ENCODE measurements at regions of chr13 and their contacts with region 1.

Region 1: DNA sequence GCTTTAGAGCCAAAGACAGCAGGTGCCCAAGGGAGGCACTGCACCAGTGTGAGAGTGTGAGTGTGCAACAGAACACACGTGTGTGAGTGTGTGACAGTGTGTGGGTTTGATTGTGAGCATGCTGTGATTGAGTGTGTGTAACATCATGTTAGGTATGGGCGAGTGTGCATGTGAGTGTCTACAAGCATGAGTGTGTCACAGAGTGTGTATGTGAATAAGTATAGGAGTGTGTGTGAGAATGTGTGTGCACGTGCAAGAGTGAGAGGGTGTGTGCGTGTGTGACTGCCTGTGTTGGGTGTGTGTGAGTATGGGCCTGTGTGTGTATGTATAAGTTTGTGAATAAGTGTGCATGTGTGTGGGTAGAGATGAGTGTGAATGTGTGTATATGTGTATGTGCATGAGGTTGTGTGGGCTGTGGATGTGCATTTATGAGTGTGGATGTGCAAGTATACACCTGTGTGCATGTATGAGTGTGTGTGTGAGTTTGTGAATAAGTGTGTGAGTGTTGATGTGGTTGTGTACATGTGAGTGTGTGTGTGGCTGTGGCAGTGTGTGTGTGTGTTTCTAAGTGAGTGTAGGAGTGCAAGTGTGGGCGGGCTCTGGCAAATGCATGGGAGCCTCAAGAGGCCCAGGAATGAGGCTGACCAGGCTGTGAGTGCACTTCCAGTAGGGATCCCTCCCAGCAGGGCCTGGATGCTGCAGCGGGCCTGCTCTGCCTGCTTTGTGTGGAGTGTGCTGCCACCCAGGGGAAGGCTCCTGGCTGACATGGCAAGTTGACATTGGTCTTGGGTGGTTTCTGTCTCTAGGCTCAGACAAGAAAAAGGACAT is 198.4 kb downstream of the COL4A1 start:
- DNase-seq: peak in 1 of 2 donors; percentile 57
- H3K4me3 ChIP-seq: no peak overlapping the region
- CTCF ChIP-seq: no peak
- POLR2A ChIP-seq: no peak

Region 2: GRCh38 chr13:108957369-108958012 is 1151.1 kb before region 1 on chr13:
- intact Hi-C with region 1: loop called (anchors 10 kb)
- DNase-seq: no peak
- H3K4me3 ChIP-seq: no peak overlapping the region
- CTCF ChIP-seq: no peak
- POLR2A ChIP-seq: no peak

Region 3: GRCh38 chr13:109145631-109146030 is 962.9 kb before region 1 on chr13:
- intact Hi-C with region 1: loop called (anchors 5 kb)
- DNase-seq: no peak
- H3K4me3 ChIP-seq: no peak overlapping the region
- CTCF ChIP-seq: no peak
- POLR2A ChIP-seq: no peak

Region 4: DNA sequence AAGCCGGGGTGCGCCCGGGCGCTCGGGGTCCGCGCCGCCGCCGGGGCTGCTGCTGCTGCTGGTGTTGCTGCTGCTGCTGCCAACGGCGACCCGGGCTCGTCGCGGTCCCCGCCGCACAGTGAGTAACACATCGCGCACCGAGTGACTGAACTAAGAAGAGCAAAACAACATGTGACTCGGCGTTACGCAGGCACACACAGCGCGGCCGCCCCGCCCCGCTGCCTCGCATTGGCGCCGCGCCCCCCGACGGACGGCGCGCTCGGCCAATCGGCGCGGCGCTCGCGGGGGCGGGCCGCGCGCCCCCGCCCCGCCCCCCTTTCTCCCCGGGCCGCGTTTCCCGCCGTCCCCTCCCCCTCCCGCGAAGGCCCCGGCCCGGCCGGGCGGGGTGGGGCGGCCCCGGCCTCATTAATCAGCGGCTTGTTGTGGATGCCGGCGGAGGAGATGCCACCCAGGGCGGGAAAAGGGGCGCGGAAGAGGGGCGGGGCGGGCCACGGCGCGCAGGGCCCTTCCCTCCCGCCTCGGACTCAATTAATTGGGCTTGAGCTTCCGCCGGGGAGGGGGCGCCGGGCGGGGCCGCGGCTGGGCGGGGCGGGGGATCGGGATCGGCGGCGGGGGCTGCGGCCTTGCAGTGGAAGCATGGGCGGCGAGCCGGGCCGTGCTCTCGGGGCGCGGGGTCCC is 322.0 kb before region 1 on chr13 and contains the start of gene IRS2:
- intact Hi-C with region 1: loop called (anchors 10 kb)
- DNase-seq: peak; percentile 95 to 99
- H3K4me3 ChIP-seq: peak within 1 kb of the TSS; percentile 62
- CTCF ChIP-seq: no peak
- POLR2A ChIP-seq: peak in 1 of 2 donors; percentile 98
- total RNA-seq, gene IRS2: 52.6 to 114 (median 56.1) TPM